ENCODE measurements at regions of chr22 and their contacts with region 1.

Region 1: GRCh38 chr22:36301384-36301828 is 48.5 kb downstream of the APOL1 start:
- DNase-seq: peak; percentile 56
- H3K4me3 ChIP-seq: no peak overlapping the region
- H3K27ac ChIP-seq: no peak overlapping the region
- H3K4me1 ChIP-seq: peaks cover 12% of the 10 kb centered on the region
- H3K27me3 ChIP-seq: no peaks in the 10 kb centered on the region
- CTCF ChIP-seq: peak; percentile 88 to 98

Region 2: DNA sequence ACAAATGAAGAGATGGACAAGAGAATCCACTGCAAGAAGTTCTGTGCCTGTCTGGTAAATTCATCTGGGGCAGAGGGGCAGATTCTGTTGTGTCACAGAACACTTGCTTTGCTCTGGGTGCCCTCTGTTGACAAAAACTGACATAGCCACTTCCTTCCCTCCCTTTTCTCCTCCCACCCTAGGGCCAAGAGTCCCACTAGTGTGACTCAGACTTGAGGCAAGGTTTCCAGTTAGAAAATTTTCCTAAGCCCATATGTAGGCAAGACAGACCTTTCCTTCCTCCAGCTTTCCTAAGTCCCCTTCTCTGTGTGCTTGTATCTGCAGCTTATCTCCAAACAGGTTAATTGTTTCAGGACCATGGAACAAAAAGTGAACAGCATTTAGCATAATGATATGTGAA is 379.6 kb before region 1 on chr22:
- CTCF ChIA-PET with region 1: no interaction called
- dilution Hi-C with region 1: no loop called
- in situ Hi-C with region 1: no loop called
- intact Hi-C with region 1: no loop called
- DNase-seq: peak; percentile 87
- H3K4me3 ChIP-seq: no peak overlapping the region
- H3K27ac ChIP-seq: peak overlapping the region; percentile 27
- H3K4me1 ChIP-seq: peaks cover 32% of the 10 kb centered on the region
- H3K27me3 ChIP-seq: no peaks in the 10 kb centered on the region
- CTCF ChIP-seq: peak; percentile 46 to 74

Region 3: DNA sequence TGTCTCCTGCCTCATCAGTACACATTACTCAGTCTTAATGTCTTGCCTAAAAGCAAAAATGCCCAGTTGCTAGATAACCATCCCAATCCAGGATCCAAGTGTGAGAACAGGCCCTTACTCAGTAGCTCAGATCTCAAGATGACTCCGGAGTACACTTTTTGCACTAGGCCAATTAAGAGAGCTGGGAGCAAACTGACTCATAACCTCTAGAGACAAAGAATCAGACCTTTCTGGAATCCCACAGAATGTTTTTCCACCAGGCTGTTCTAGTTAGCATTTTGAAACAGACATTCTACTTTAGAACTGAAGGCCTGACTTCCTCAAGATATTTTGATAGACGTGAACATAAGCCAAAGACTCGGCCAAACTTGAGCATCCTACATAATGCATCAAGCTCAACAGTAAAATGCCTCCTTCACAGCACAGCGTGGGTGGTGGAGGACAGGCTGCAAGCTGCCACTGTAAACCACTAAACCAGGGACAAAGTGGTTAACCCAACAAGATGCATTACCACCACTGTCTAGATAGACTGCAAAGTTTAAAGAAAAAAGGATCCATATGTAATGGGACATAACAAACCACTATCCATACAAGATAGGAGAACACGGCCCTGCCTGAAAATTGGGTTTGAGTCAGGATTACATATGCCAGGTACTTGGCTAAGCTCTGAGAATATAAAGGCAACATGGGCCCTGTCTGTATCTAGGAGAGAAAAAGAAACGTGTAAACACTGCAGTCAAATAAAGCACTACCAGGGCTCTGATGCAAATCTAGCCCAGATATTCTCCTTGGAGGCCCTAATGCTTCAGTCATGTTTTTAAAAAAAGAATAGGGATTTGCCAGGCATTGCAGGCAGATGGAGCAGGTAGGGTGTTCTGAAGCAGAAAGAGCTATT is 38.0 kb after region 1 on chr22:
- CTCF ChIA-PET with region 1: no interaction called
- dilution Hi-C with region 1: loop called (anchors 5 kb)
- in situ Hi-C with region 1: no loop called
- intact Hi-C with region 1: no loop called
- DNase-seq: peak; percentile 73
- H3K4me3 ChIP-seq: no peak overlapping the region
- H3K27ac ChIP-seq: peak overlapping the region; percentile 53
- H3K4me1 ChIP-seq: peaks cover 78% of the 10 kb centered on the region
- H3K27me3 ChIP-seq: no peaks in the 10 kb centered on the region
- CTCF ChIP-seq: no peak

Region 4: GRCh38 chr22:36404446-36404845 is 103.0 kb after region 1 on chr22:
- CTCF ChIA-PET with region 1: no interaction called
- dilution Hi-C with region 1: loop called (anchors 5 kb)
- in situ Hi-C with region 1: no loop called
- intact Hi-C with region 1: no loop called
- DNase-seq: no peak
- H3K4me3 ChIP-seq: no peak overlapping the region
- H3K27ac ChIP-seq: no peak overlapping the region
- H3K4me1 ChIP-seq: peaks cover 16% of the 10 kb centered on the region
- H3K27me3 ChIP-seq: no peaks in the 10 kb centered on the region
- CTCF ChIP-seq: no peak